Psoas muscle (tissue), 8 donors: ENCODE measurements at regions of chr7 and their contacts with region 1.

Region 1: GRCh38 chr7:75789361-75789924 is 17.4 kb upstream of the CCL26 start:
- DNase-seq: no peak
- ATAC-seq: no peak
- H3K4me3 ChIP-seq: no peak overlapping the region
- H3K27ac ChIP-seq: no peak overlapping the region
- H3K4me1 ChIP-seq: no peaks in the 10 kb centered on the region
- H3K27me3 ChIP-seq: no peaks in the 10 kb centered on the region
- CTCF ChIP-seq: no peak

Region 2: DNA sequence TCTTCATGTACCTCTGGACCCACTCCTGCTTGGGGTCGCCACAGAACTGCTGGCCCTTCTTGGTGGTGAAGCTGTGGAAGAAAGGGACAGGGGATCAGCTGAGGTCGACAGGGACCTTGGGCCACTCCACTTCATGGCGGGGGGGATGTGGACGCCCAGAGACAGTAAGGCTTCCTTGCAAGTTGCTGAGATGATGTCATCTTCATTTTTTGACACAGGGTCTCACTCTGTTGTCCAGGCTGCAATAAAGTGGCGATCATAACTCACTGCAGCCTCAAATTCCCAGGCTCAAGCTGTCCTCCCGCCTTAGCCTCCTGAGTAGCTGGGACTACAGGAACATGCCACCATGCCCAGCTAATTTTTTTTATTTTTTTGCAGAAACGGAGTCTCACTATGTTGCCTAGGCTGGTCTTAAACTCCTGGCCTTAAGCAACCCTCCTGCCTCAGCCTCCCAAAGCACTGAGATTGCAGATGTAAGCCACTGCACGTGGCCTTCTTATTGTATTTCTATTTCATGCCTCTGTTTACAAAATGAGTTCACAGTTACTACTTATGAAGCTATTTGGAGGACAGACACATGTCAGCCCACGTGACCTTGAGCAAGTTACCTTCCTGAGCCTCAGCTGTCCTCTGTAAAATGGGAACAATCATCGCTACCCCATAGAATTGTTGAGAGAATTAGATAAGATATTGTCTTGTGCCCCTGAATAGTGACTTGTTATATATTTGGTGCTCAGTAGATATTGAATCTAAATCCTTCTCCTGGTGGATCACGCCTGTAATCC is 22.6 kb after region 1 on chr7:
- intact Hi-C with region 1: loop called in 1 of 2 experiments (anchors 2 kb)
- DNase-seq: no peak
- ATAC-seq: no peak
- H3K4me3 ChIP-seq: no peak overlapping the region
- H3K27ac ChIP-seq: no peak overlapping the region
- H3K4me1 ChIP-seq: no peaks in the 10 kb centered on the region
- H3K27me3 ChIP-seq: peaks cover 0 to 4% (median 0%) of the 10 kb centered on the region in 3 donors
- CTCF ChIP-seq: no peak